ENCODE measurements at regions of chr7 and their contacts with region 1.

Region 1: DNA sequence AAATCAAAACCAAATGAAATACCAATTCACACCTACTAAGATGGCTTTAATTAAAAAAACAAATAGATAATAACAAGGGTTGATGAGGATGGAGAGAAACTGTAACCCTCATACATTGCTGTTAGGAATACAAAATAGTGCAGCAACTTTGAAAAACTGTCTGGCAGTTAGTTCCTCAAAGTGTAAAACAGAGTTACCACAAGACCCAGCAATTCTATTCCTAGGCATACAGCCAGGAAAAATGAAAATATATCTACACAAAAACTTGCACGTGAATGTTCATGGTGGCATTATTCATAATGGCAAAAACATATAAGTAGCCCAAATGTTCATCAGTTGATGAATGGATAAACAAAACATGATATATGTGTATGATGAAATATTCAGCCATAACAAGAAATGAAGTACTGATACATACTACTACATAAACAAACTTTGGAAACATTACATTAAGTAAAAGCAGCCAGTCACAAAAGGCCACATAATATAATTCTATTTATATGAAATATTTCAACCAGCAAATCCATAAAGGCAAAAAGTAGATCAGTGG is 83.5 kb downstream of the BRAF start:
- DNase-seq: no peak
- H3K4me3 ChIP-seq: no peak overlapping the region
- H3K27ac ChIP-seq: no peak overlapping the region
- H3K4me1 ChIP-seq: peaks cover 0 to 4% (median 0%) of the 10 kb centered on the region in 4 donors
- H3K27me3 ChIP-seq: no peaks in the 10 kb centered on the region
- CTCF ChIP-seq: no peak
- EP300 ChIP-seq: no peak
- POLR2A ChIP-seq: no peak

Region 2: GRCh38 chr7:140828741-140829140 is 12.5 kb before region 1 on chr7:
- in situ Hi-C with region 1: no loop called
- intact Hi-C with region 1: loop called (anchors 2 kb)
- DNase-seq: no peak
- H3K4me3 ChIP-seq: no peak overlapping the region
- H3K27ac ChIP-seq: no peak overlapping the region
- H3K4me1 ChIP-seq: no peaks in the 10 kb centered on the region
- H3K27me3 ChIP-seq: no peaks in the 10 kb centered on the region
- CTCF ChIP-seq: no peak
- EP300 ChIP-seq: no peak
- POLR2A ChIP-seq: no peak